ENCODE measurements at regions of chr2 and their contacts with region 1.

Region 1: DNA sequence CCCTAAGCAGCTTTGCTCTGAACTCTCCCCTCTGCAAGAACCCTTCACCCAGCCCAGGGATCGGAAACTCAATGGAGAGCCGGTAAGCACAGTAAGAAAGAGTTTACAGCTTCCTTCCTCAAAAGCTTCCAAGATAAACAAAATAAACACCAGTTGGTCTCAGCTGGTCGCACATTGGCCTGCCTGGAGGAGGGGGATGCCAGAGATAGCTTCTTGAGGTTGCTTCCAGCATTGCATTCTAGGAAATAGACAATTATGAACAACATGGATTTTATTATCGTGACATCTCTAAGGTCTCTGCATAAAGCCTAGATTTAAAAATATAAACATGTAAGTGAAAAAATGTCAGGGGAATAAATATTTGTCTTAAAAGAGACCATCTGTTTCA is 141.5 kb upstream of the PKDCC start:
- DNase-seq: no peak
- H3K4me3 Mint-ChIP-seq: no peak overlapping the region
- H3K27ac Mint-ChIP-seq: no peak overlapping the region
- H3K4me1 Mint-ChIP-seq: peaks cover 11% of the 10 kb centered on the region
- H3K27me3 Mint-ChIP-seq: no peaks in the 10 kb centered on the region
- CTCF ChIP-seq: no peak

Region 2: DNA sequence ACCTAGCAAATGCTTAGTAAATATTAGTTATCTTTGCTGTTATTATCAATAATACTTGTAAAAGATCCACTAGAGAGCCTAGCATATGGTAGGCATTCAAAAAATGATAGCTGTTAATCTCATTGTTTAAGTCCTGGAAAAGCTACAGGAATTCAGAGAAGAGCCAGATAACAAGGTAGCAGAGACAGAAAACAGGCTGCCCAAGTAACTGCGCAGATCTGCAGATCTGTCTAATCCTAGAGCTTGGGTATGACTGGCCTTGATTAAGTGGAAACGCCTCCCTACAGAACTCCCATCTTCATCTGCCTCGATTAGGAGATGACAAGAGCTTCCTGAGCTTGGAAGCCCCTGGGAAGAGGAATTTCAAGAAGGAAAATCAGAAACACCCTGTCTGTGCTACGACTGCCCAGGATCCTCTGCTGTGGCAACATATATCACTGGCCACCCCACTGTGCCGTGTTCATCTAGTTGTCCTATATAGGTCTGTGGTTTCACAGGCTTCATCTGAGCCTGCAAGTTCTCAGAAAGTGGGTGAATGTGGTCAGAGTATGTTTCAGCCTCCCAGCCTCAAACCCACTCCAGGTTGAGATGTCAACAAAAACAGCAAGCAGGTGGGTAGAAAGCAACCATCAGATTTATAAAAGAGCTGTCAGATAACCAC is 10.0 kb before region 1 on chr2:
- CTCF ChIA-PET with region 1: interaction called, 5 read pairs
- POLR2A ChIA-PET with region 1: interaction called, 13 read pairs
- intact Hi-C with region 1: no loop called
- DNase-seq: no peak
- H3K4me3 Mint-ChIP-seq: no peak overlapping the region
- H3K27ac Mint-ChIP-seq: no peak overlapping the region
- H3K4me1 Mint-ChIP-seq: peaks cover 5% of the 10 kb centered on the region
- H3K27me3 Mint-ChIP-seq: no peaks in the 10 kb centered on the region
- CTCF ChIP-seq: no peak